ENCODE measurements at regions of chr11 and their contacts with region 1.

Region 1: GRCh38 chr11:10405855-10406592 is 49.0 kb upstream of the AMPD3 start:
- DNase-seq: peak; percentile 92
- ATAC-seq: peak; percentile 88
- H3K4me3 ChIP-seq: no peak overlapping the region
- H3K27ac ChIP-seq: peak overlapping the region; percentile 23; the same call in 1 of the 2 replicates
- H3K4me1 ChIP-seq: peaks cover 14% of the 10 kb centered on the region
- H3K27me3 ChIP-seq: no peaks in the 10 kb centered on the region
- CTCF ChIP-seq: peak; percentile 95
- POLR2A ChIP-seq: no peak
- RAD21 ChIP-seq: peak; percentile 93

Region 2: GRCh38 chr11:10164621-10165020 is 241.4 kb before region 1 on chr11:
- CTCF ChIA-PET with region 1: no interaction called
- POLR2A ChIA-PET with region 1: no interaction called
- dilution Hi-C with region 1: no loop called
- in situ Hi-C with region 1: no loop called
- intact Hi-C with region 1: no loop called
- DNase-seq: peak; percentile 4
- ATAC-seq: 0 out of 2 replicates have a peak, but pooled peaks have one; percentile 24
- H3K4me3 ChIP-seq: no peak overlapping the region
- H3K27ac ChIP-seq: no peak overlapping the region
- H3K4me1 ChIP-seq: peaks cover 3% of the 10 kb centered on the region
- H3K27me3 ChIP-seq: no peaks in the 10 kb centered on the region
- CTCF ChIP-seq: no peak
- POLR2A ChIP-seq: no peak
- RAD21 ChIP-seq: no peak

Region 3: DNA sequence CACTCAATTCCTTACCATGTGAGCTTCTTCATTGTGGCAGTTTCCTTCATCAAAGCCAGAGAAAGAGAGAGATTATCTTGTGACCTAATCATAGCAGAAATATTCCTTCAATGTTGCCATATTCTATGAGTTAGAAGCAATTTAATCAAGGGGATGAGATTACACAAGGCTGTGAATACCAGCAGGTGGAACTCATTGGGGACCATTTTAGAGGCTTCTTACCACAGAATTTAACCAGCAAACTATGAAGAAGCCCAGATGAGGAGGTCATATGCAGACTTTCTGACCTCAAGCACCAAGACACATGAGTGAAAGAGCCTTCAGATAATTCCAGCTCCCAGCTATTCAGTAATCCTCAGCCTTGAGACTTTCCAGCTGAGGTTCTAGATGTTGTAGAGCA is 49.9 kb before region 1 on chr11:
- CTCF ChIA-PET with region 1: no interaction called
- POLR2A ChIA-PET with region 1: no interaction called
- dilution Hi-C with region 1: no loop called
- in situ Hi-C with region 1: no loop called
- intact Hi-C with region 1: no loop called
- DNase-seq: no peak
- ATAC-seq: no peak
- H3K4me3 ChIP-seq: no peak overlapping the region
- H3K27ac ChIP-seq: no peak overlapping the region
- H3K4me1 ChIP-seq: peaks cover 13% of the 10 kb centered on the region
- H3K27me3 ChIP-seq: no peaks in the 10 kb centered on the region
- CTCF ChIP-seq: no peak
- POLR2A ChIP-seq: no peak
- RAD21 ChIP-seq: no peak

Region 4: DNA sequence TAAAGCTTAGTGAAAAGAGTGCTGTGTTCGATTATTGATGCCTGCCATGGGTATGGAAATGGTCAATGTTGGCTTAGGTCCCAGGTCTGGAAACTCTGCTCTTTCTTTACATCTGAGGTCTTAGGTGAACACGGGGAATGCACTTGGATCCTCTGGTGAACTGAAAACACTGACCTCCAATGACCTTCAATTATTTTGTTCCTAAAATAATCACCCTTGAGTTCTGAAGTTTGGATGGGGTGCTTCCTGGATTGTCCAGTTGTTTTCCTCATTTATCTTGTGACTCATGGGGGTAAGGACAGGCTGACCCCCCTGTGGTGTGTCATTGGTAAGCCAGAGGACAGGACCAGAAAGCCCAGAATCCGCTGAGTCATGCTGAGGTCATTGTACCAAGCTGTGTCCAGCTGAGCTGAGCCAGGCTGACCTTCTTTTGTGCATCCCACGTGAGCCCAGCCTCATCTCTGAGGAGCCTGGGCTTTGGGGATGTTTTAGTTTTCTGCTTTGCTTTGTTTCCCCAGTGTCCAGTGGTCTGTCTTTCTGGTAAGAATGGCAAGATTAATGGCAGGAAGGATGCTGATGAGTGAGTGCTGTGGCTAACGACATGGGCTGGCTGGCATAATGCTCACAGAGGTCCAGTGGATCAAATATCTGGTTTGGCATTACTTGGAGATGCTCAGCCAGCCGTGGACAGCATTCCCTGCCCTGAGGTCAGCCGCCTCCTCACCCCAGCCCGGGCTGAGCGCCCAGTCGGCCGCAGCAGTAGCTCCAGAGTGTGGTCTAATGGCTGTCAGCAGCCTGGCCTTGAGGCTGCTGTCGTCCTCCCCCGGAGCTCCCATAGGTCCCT is 84.6 kb after region 1 on chr11:
- CTCF ChIA-PET with region 1: interaction called, 4 read pairs
- POLR2A ChIA-PET with region 1: no interaction called
- dilution Hi-C with region 1: no loop called
- in situ Hi-C with region 1: loop called (anchors 5 kb)
- intact Hi-C with region 1: loop called (anchors 1 kb)
- DNase-seq: peak; percentile 99
- ATAC-seq: peak; percentile 92
- H3K4me3 ChIP-seq: no peak overlapping the region
- H3K27ac ChIP-seq: peak overlapping the region; percentile 88
- H3K4me1 ChIP-seq: peaks cover 22% of the 10 kb centered on the region
- H3K27me3 ChIP-seq: no peaks in the 10 kb centered on the region
- CTCF ChIP-seq: no peak
- POLR2A ChIP-seq: no peak
- RAD21 ChIP-seq: no peak; the same call in 1 of the 2 replicates

Region 5: GRCh38 chr11:10514210-10514609 is 108.2 kb after region 1 on chr11:
- CTCF ChIA-PET with region 1: interaction called, 3 read pairs
- POLR2A ChIA-PET with region 1: no interaction called
- dilution Hi-C with region 1: no loop called
- in situ Hi-C with region 1: no loop called
- intact Hi-C with region 1: loop called (anchors 5 kb)
- DNase-seq: peak; percentile 49
- ATAC-seq: no peak
- H3K4me3 ChIP-seq: no peak overlapping the region
- H3K27ac ChIP-seq: no peak overlapping the region
- H3K4me1 ChIP-seq: peaks cover 4% of the 10 kb centered on the region; the same call in 1 of the 2 replicates
- H3K27me3 ChIP-seq: no peaks in the 10 kb centered on the region
- CTCF ChIP-seq: peak; percentile 46
- POLR2A ChIP-seq: no peak
- RAD21 ChIP-seq: peak; percentile 48

Region 6: GRCh38 chr11:10540923-10541560 is 135.0 kb after region 1 on chr11 and contains the start of gene RNF141:
- CTCF ChIA-PET with region 1: interaction called, 10 read pairs
- POLR2A ChIA-PET with region 1: no interaction called
- dilution Hi-C with region 1: no loop called
- in situ Hi-C with region 1: no loop called
- intact Hi-C with region 1: no loop called
- DNase-seq: peak; percentile 87
- ATAC-seq: peak; percentile 99
- H3K4me3 ChIP-seq: peak within 1 kb of the TSS; percentile 77
- H3K27ac ChIP-seq: peak within 1 kb of the TSS; percentile 79
- H3K4me1 ChIP-seq: peaks cover 2% of the 10 kb centered on the region
- H3K27me3 ChIP-seq: no peaks in the 10 kb centered on the region
- CTCF ChIP-seq: peak; percentile 86
- POLR2A ChIP-seq: peak; percentile 92
- RAD21 ChIP-seq: peak; percentile 49
- total RNA-seq, gene RNF141: 18.6 and 34.2 TPM in 2 replicates

Region 7: GRCh38 chr11:10606536-10607208 is 200.6 kb after region 1 on chr11:
- CTCF ChIA-PET with region 1: no interaction called
- POLR2A ChIA-PET with region 1: no interaction called
- dilution Hi-C with region 1: no loop called
- in situ Hi-C with region 1: no loop called
- intact Hi-C with region 1: loop called (anchors 2 kb)
- DNase-seq: peak; percentile 86
- ATAC-seq: peak; percentile 59
- H3K4me3 ChIP-seq: no peak overlapping the region
- H3K27ac ChIP-seq: peak overlapping the region; percentile 93
- H3K4me1 ChIP-seq: peaks cover 29% of the 10 kb centered on the region
- H3K27me3 ChIP-seq: no peaks in the 10 kb centered on the region
- CTCF ChIP-seq: no peak
- POLR2A ChIP-seq: no peak
- RAD21 ChIP-seq: no peak

Region 8: DNA sequence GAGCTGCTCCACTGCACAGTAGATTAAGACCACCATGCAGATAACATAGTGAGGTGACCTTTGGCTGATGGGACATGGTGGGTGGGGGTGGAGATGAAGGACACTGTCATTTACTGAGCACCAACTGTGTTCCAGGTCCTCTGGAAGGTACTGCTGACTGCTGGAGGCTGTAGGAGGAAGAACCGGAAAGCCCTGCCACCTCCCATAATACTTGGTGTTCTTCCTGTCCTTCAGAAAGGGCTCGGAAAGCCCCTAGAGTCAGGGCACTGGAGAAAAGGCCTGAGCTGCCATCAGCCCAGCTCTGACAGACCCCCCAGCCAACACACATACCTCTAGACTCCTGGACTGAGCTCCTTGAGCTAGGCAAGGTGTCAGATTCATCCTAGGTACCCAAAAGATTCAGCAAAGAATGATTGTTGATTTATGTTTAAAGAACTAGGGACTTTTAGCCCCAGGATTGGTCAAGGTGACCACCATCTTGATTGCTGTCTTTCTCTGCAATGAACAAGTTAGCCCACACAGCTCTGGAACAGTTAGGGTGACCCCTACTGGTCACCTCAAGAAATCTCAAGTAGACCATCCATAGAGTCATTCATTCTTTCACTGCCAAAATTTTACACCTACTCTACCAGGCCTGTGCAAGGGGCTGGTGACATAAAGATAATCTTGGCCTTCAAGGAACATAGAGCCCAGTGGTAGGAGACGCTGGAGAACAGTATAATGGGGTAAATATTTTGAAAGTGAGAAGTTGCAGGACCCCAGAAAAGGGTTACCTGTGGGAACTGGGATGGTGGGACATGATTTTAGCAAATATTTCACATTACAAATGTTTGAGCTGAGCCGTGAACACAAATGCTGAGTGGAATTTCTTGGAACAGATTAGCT is 248.1 kb after region 1 on chr11:
- CTCF ChIA-PET with region 1: no interaction called
- POLR2A ChIA-PET with region 1: no interaction called
- dilution Hi-C with region 1: no loop called
- in situ Hi-C with region 1: loop called (anchors 10 kb)
- intact Hi-C with region 1: loop called (anchors 2 kb)
- DNase-seq: peak; percentile 67
- ATAC-seq: peak; percentile 28; the same call in 1 of the 2 replicates
- H3K4me3 ChIP-seq: no peak overlapping the region
- H3K27ac ChIP-seq: no peak overlapping the region
- H3K4me1 ChIP-seq: peaks cover 45% of the 10 kb centered on the region
- H3K27me3 ChIP-seq: no peaks in the 10 kb centered on the region
- CTCF ChIP-seq: peak; percentile 61
- POLR2A ChIP-seq: no peak
- RAD21 ChIP-seq: peak; percentile 77